Activated B cell treated with CpG ODN at 0.5 μM for 24 hours (primary cell): ENCODE measurements at regions of chr9 and their contacts with region 1.

Region 1: GRCh38 chr9:14428781-14429230 is 114.9 kb upstream of the NFIB start:
- DNase-seq: no peak
- ATAC-seq: no peak
- H3K4me3 Mint-ChIP-seq: no peak overlapping the region
- H3K27ac Mint-ChIP-seq: no peak overlapping the region
- H3K4me1 Mint-ChIP-seq: peaks cover 2% of the 10 kb centered on the region
- H3K27me3 Mint-ChIP-seq: peaks cover 14% of the 10 kb centered on the region
- CTCF ChIP-seq: no peak

Region 2: DNA sequence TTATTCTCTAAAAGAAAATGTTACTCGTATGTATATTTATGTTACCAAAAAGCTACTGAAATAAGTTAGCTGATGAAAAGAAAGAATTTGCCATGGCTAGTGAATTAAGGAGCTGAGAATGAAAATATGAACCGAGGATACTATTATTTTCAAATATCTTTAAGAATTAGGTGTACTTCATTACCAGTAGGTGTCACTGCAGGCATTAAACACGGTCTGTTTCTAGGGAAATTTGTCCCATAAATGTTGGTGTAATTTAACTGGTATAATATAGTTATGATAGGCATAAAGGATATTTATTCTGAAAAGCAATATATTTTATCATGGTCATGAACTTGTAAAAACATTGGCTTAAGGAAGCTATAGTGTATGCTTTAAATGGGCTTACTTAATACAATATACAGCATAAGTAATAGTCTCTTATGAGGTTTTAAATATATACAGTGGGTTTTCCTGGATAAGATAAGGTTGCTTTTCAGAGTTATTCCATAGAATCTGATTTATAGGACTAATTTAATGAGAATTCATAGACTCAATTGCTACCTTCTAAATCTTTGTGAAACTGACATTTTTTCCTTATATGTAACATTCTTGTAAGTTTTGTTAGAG is 1076.9 kb before region 1 on chr9:
- CTCF ChIA-PET with region 1: no interaction called
- POLR2A ChIA-PET with region 1: no interaction called
- intact Hi-C with region 1: loop called (anchors 5 kb)
- DNase-seq: no peak
- ATAC-seq: no peak
- H3K4me3 Mint-ChIP-seq: no peak overlapping the region
- H3K27ac Mint-ChIP-seq: no peak overlapping the region
- H3K4me1 Mint-ChIP-seq: no peaks in the 10 kb centered on the region
- H3K27me3 Mint-ChIP-seq: no peaks in the 10 kb centered on the region
- CTCF ChIP-seq: no peak

Region 3: DNA sequence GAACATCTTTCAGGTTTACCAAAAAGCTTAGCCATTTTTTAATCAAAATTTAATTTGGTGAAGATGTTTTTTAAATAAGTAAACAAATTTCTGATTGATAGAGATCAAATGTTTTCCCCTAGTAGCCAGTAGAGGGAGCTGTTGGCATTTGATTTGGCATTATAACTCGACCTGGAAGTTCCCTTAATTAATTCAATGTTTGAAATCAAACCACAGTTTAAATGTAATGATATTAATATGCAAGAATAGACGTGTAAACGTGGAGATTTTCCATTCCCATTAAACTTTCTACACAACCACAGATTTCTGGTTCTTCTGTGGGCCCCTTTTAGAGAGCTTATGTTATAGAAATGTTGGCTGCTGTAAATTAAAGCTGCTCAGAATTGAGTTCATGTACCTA is 1001.2 kb before region 1 on chr9:
- CTCF ChIA-PET with region 1: interaction called, 3 read pairs
- POLR2A ChIA-PET with region 1: no interaction called
- intact Hi-C with region 1: loop called (anchors 1 kb)
- DNase-seq: no peak
- ATAC-seq: no peak
- H3K4me3 Mint-ChIP-seq: no peak overlapping the region
- H3K27ac Mint-ChIP-seq: no peak overlapping the region
- H3K4me1 Mint-ChIP-seq: no peaks in the 10 kb centered on the region
- H3K27me3 Mint-ChIP-seq: no peaks in the 10 kb centered on the region
- CTCF ChIP-seq: no peak